ENCODE measurements at regions of chr15 and their contacts with region 1.

Region 1: GRCh38 chr15:64731012-64731806 is 44.2 kb downstream of the RBPMS2 start:
- DNase-seq: peak; percentile 72
- H3K4me3 ChIP-seq: no peak overlapping the region
- H3K27ac ChIP-seq: no peak overlapping the region
- H3K4me1 ChIP-seq: no peaks in the 10 kb centered on the region
- H3K27me3 ChIP-seq: no peaks in the 10 kb centered on the region
- CTCF ChIP-seq: peak; percentile 80 to 91

Region 2: DNA sequence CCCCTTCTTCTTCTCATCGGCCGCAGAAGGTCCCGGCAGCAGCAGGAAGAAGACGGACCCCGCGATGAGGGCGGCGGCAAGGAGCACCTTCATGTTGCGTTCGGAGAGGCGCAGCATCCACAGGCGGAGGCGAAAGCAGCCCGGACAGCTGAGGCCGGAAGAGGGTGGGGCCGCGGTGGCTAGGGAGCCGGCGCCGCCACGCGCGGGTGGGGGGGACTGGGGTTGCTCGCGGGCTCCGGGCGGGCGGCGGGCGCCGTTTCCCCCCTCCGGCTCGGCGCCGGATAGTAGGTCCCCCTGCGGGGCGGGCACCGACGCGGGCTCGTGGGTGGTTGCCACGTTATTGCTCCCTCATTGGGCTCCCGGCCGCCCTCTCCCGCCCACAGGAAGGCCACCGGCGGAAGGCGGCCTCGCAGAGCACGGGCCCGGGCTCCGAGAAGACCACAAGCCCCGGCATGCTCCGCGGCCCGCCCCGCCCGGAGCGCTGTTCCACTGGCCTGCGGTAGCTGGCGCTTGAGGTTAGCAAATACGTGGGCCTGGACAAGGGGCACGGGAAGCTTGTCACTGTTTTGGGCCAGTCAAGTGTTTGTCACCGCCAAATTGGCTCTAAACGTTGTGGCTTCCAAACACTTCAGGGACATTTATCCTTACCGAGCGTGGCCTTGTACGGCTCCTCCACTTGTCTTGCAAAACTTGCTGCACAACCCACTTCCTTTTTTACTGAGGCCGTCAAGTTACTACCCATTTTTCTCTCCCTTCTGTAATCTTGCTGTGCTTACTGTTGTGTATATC is 568.1 kb before region 1 on chr15 and contains the start of gene PPIB:
- CTCF ChIA-PET with region 1: no interaction called
- dilution Hi-C with region 1: no loop called
- in situ Hi-C with region 1: no loop called
- intact Hi-C with region 1: loop called (anchors 5 kb)
- DNase-seq: peak; percentile 98
- H3K4me3 ChIP-seq: peak within 1 kb of the TSS; percentile 95 to 99 (median 97)
- H3K27ac ChIP-seq: peak within 1 kb of the TSS; percentile 75
- H3K4me1 ChIP-seq: peaks cover 21% of the 10 kb centered on the region
- H3K27me3 ChIP-seq: no peaks in the 10 kb centered on the region
- CTCF ChIP-seq: peak; percentile 24 to 59
- total RNA-seq, gene PPIB: 360 to 523 TPM

Region 3: GRCh38 chr15:64597477-64597822 is 133.8 kb before region 1 on chr15:
- CTCF ChIA-PET with region 1: interaction called, 12 read pairs
- dilution Hi-C with region 1: no loop called
- in situ Hi-C with region 1: no loop called
- intact Hi-C with region 1: no loop called
- DNase-seq: no peak
- H3K4me3 ChIP-seq: no peak overlapping the region
- H3K27ac ChIP-seq: no peak overlapping the region
- H3K4me1 ChIP-seq: peaks cover 19% of the 10 kb centered on the region
- H3K27me3 ChIP-seq: no peaks in the 10 kb centered on the region
- CTCF ChIP-seq: no peak

Region 4: GRCh38 chr15:64809649-64810496 is 78.7 kb after region 1 on chr15:
- CTCF ChIA-PET with region 1: interaction called, 6 read pairs
- dilution Hi-C with region 1: no loop called
- in situ Hi-C with region 1: loop called (anchors 5 kb)
- intact Hi-C with region 1: loop called (anchors 1 kb)
- DNase-seq: peak; percentile 41
- H3K4me3 ChIP-seq: no peak overlapping the region
- H3K27ac ChIP-seq: no peak overlapping the region
- H3K4me1 ChIP-seq: no peaks in the 10 kb centered on the region
- H3K27me3 ChIP-seq: no peaks in the 10 kb centered on the region
- CTCF ChIP-seq: peak; percentile 86 to 97

Region 5: GRCh38 chr15:65008983-65009382 is 277.8 kb after region 1 on chr15:
- CTCF ChIA-PET with region 1: no interaction called
- dilution Hi-C with region 1: no loop called
- in situ Hi-C with region 1: no loop called
- intact Hi-C with region 1: loop called (anchors 1 kb)
- DNase-seq: peak; percentile 21
- H3K4me3 ChIP-seq: no peak overlapping the region
- H3K27ac ChIP-seq: no peak overlapping the region
- H3K4me1 ChIP-seq: peaks cover 8% of the 10 kb centered on the region
- H3K27me3 ChIP-seq: no peaks in the 10 kb centered on the region
- CTCF ChIP-seq: no peak

Region 6: DNA sequence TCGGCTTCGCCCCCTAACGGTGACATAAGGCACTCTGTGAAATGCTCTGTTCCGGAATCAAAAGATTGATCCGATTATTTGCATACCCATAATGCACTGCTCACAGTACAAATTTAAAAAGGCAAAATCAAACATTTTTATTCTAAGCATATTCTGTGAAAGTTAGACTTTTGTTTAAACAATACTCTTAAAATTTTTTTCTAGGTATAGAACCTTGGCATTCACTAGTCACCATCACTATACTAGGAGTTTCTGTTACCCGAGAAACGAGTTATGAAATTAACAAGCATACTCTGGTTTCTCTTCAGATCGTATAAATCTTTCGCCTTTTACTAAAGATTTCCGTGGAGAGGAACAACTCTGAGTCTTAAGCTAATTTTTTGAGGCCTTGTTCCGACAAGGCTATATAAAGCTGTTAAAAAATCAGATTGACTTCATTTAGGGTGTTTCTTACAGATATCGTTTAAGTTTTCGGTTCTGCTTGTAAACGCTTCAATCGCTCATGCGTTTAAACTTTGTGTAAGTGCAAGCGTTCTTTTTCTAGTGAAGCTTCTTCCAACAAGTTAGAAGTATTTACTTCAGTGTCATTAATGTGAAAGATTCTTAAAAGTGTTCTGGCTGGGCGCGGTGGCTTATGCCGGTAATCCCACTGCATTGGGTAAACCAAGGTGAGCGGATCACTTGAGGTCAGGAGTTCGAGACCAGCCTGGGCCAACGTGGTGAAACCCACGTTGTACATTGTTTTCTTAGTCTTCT is 573.4 kb after region 1 on chr15 and contains the start of gene RNU5B-1:
- CTCF ChIA-PET with region 1: no interaction called
- dilution Hi-C with region 1: no loop called
- in situ Hi-C with region 1: no loop called
- intact Hi-C with region 1: loop called (anchors 5 kb)
- DNase-seq: peak; percentile 70
- H3K4me3 ChIP-seq: peak within 1 kb of the TSS; percentile 40 to 90 (median 45)
- H3K27ac ChIP-seq: peak within 1 kb of the TSS; percentile 100
- H3K4me1 ChIP-seq: peaks cover 14% of the 10 kb centered on the region
- H3K27me3 ChIP-seq: no peaks in the 10 kb centered on the region
- CTCF ChIP-seq: peak; percentile 87 to 94
- total RNA-seq, gene RNU5B-1: not detected

Measured in mammary epithelial cell (primary cell).